ENCODE measurements at regions of chr19 and their contacts with region 1.

Region 1: GRCh38 chr19:15812060-15812682 is 3.3 kb downstream of the OR10H1 start:
- DNase-seq: peak in 31 of 35 experiments; percentile 4 to 75 (median 37)
- ATAC-seq: peak; percentile 64 to 93 (median 73)
- H3K4me3 ChIP-seq: no peak overlapping the region
- H3K4me3 Mint-ChIP-seq: no peak overlapping the region
- H3K27ac ChIP-seq: no peak overlapping the region
- H3K27ac Mint-ChIP-seq: no peak overlapping the region
- H3K4me1 ChIP-seq: peaks cover 0 to 12% of the 10 kb centered on the region in 2 experiments
- H3K4me1 Mint-ChIP-seq: peaks cover 5 to 27% (median 23%) of the 10 kb centered on the region in 3 donors
- H3K27me3 ChIP-seq: peaks cover 2 to 26% of the 10 kb centered on the region in 2 experiments
- H3K27me3 Mint-ChIP-seq: peaks cover 17 to 21% of the 10 kb centered on the region in 2 donors

Region 2: DNA sequence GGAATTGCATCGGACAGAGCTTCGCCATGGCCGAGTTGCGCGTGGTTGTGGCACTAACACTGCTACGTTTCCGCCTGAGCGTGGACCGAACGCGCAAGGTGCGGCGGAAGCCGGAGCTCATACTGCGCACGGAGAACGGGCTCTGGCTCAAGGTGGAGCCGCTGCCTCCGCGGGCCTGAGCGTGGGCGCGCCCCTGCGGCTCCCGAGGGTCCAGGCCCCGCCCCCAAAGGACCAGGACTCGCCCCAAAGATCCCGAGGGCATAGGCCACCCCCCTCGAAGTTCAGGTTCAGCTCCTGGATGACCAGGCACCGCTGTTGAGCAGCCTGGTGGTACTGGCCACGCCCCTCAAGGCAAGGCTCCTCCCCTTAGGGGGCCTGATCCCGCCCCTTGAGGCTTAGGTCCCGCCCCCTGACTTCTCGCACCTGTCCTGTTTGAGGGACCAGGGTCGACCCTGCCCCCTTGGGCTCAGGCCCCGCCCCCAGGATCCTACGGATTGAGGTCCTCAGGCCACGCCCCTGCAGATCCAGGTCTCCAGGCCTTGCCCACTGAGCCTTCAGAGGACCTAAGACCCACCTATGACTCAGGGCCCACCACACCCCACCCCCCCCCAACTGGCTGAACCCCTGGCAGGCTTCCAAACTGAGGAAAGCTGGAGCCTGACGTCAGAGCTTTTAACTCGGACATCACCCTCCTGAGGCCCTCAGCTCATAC is 260.7 kb before region 1 on chr19:
- CTCF ChIA-PET with region 1: no interaction called
- POLR2A ChIA-PET with region 1: no interaction called
- DNase-seq: peak; percentile 31 to 82 (median 62)
- ATAC-seq: peak; percentile 52 to 69 (median 60)
- H3K4me3 ChIP-seq: peak overlapping the region; percentile 70 to 84
- H3K4me3 Mint-ChIP-seq: peak overlapping the region; percentile 80 to 85 (median 83)
- H3K27ac ChIP-seq: peak overlapping the region; percentile 70
- H3K27ac Mint-ChIP-seq: peak overlapping the region; percentile 91 to 92
- H3K4me1 ChIP-seq: peaks cover 15 to 35% of the 10 kb centered on the region in 2 experiments
- H3K4me1 Mint-ChIP-seq: peaks cover 27 to 38% (median 32%) of the 10 kb centered on the region in 3 donors
- H3K27me3 ChIP-seq: no peaks in the 10 kb centered on the region
- H3K27me3 Mint-ChIP-seq: no peaks in the 10 kb centered on the region

Region 3: GRCh38 chr19:15730538-15730937 is 81.6 kb before region 1 on chr19:
- CTCF ChIA-PET with region 1: no interaction called
- POLR2A ChIA-PET with region 1: no interaction called
- DNase-seq: peak in 1 of 35 experiments; percentile 5
- ATAC-seq: no peak
- H3K4me3 ChIP-seq: no peak overlapping the region
- H3K4me3 Mint-ChIP-seq: no peak overlapping the region
- H3K27ac ChIP-seq: no peak overlapping the region
- H3K27ac Mint-ChIP-seq: no peak overlapping the region
- H3K4me1 ChIP-seq: no peaks in the 10 kb centered on the region
- H3K4me1 Mint-ChIP-seq: peaks cover 0 to 6% (median 3%) of the 10 kb centered on the region in 3 donors
- H3K27me3 ChIP-seq: peaks cover 0 to 20% of the 10 kb centered on the region in 2 experiments
- H3K27me3 Mint-ChIP-seq: peaks cover 37 to 42% of the 10 kb centered on the region in 2 donors

Region 4: DNA sequence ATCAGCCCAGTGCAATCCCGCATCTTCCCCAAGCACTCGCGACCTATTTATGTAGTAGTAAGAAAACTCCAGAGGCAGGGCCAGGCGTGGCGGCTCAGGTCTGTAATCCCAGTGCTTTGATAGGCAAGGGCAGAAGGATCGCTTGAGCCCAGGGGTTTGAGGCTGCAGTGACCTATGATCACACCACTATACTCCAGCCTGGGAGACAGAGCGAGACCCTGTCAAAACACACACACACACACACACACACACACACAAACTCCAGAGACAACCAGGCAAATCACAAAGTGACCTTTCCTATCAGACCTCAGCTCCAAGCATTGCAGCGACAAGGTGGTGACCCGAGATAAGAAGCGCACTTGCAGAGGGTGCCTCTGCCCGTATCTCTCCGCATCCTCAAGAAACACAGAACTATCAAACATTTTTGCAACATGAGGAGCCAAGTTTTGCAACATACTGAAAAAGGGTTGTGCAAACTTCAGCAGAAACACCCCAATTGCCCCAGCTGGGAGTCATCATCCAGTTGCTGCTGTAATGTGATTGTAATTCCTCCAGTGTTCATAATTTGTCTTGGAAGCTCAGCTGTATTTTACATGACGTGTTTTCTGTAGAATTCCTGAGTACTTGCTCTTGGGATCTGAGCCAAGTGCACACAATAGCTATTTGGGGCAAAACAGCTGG is 503.8 kb after region 1 on chr19:
- CTCF ChIA-PET with region 1: no interaction called
- POLR2A ChIA-PET with region 1: interaction called in 1 of 2 experiments, 10 read pairs
- DNase-seq: no peak
- ATAC-seq: no peak
- H3K4me3 ChIP-seq: no peak overlapping the region
- H3K4me3 Mint-ChIP-seq: no peak overlapping the region
- H3K27ac ChIP-seq: no peak overlapping the region
- H3K27ac Mint-ChIP-seq: peak overlapping the region in 1 of 2 donors; percentile 13
- H3K4me1 ChIP-seq: peaks cover 11 to 13% of the 10 kb centered on the region in 2 experiments
- H3K4me1 Mint-ChIP-seq: peaks cover 13 to 28% (median 18%) of the 10 kb centered on the region in 3 donors
- H3K27me3 ChIP-seq: peaks cover 0 to 11% of the 10 kb centered on the region in 2 experiments
- H3K27me3 Mint-ChIP-seq: no peaks in the 10 kb centered on the region

Measured in T-cell (primary cell).